PC-3 (cell line): ENCODE measurements at regions of chr12 and their contacts with region 1.

Region 1: GRCh38 chr12:114913871-114914801 is 230.2 kb upstream of the TBX3 start:
- DNase-seq: peak; percentile 94
- ATAC-seq: peak; percentile 50
- H3K4me3 ChIP-seq: no peak overlapping the region; the same call in 1 of the 2 replicates
- H3K27ac ChIP-seq: peak overlapping the region; percentile 57
- H3K4me1 ChIP-seq: peaks cover 67% of the 10 kb centered on the region
- H3K27me3 ChIP-seq: no peaks in the 10 kb centered on the region
- CTCF ChIP-seq: no peak

Region 2: GRCh38 chr12:114888448-114888847 is 25.7 kb before region 1 on chr12:
- CTCF ChIA-PET with region 1: no interaction called
- POLR2A ChIA-PET with region 1: interaction called, 3 read pairs
- intact Hi-C with region 1: loop called (anchors 1 kb)
- DNase-seq: peak; percentile 94
- ATAC-seq: peak; percentile 66
- H3K4me3 ChIP-seq: no peak overlapping the region
- H3K27ac ChIP-seq: no peak overlapping the region
- H3K4me1 ChIP-seq: peaks cover 32% of the 10 kb centered on the region
- H3K27me3 ChIP-seq: no peaks in the 10 kb centered on the region
- CTCF ChIP-seq: no peak

Region 3: GRCh38 chr12:114933428-114934168 is 19.5 kb after region 1 on chr12:
- CTCF ChIA-PET with region 1: interaction called, 7 read pairs
- POLR2A ChIA-PET with region 1: interaction called, 3 read pairs
- intact Hi-C with region 1: loop called (anchors 1 kb)
- DNase-seq: peak; percentile 98
- ATAC-seq: peak; percentile 96
- H3K4me3 ChIP-seq: peak overlapping the region; percentile 14; the same call in 1 of the 2 replicates
- H3K27ac ChIP-seq: peak overlapping the region; percentile 91
- H3K4me1 ChIP-seq: peaks cover 28% of the 10 kb centered on the region
- H3K27me3 ChIP-seq: no peaks in the 10 kb centered on the region
- CTCF ChIP-seq: no peak

Region 4: GRCh38 chr12:114999812-115000437 is 85.8 kb after region 1 on chr12:
- CTCF ChIA-PET with region 1: no interaction called
- POLR2A ChIA-PET with region 1: no interaction called
- intact Hi-C with region 1: loop called (anchors 1 kb)
- DNase-seq: peak; percentile 100
- ATAC-seq: peak; percentile 74
- H3K4me3 ChIP-seq: no peak overlapping the region
- H3K27ac ChIP-seq: peak overlapping the region; percentile 92
- H3K4me1 ChIP-seq: peaks cover 39% of the 10 kb centered on the region
- H3K27me3 ChIP-seq: no peaks in the 10 kb centered on the region
- CTCF ChIP-seq: no peak

Region 5: GRCh38 chr12:115013236-115013981 is 99.3 kb after region 1 on chr12:
- CTCF ChIA-PET with region 1: no interaction called
- POLR2A ChIA-PET with region 1: no interaction called
- intact Hi-C with region 1: no loop called
- DNase-seq: no peak
- ATAC-seq: no peak
- H3K4me3 ChIP-seq: no peak overlapping the region
- H3K27ac ChIP-seq: no peak overlapping the region
- H3K4me1 ChIP-seq: peaks cover 31% of the 10 kb centered on the region
- H3K27me3 ChIP-seq: no peaks in the 10 kb centered on the region
- CTCF ChIP-seq: no peak

Region 6: DNA sequence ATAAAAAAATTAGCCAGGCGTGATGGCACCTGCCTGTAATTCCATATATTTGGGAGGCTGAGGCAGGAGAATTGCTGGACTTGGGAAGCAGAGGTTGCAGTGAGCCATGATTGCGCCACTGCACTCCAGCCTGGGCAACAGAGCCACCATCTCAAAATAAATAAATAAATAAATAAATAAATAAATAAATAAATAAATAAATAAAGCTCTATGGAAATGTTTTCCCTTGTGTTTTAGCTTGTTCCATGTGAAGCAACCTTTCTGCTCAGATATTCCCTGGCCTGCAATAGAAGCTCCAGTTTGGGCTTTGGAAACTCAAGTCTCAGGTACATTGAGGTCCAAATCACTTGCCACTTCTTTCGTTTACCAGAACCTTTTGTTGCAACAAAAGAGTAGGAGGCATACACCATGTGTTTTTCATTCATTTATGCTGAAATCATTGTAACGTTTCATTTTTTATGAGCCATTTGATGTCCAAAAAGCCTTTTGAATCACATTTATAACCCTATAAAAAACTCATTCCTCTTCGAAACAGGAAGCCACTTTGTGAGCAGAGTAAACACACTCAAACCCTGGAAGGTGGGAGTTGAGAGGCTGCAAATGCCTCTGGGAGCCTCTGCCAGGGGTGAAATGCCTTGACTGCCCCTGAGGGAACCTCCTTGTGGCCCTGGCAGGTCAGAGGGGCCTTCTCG is 146.5 kb after region 1 on chr12:
- CTCF ChIA-PET with region 1: no interaction called
- POLR2A ChIA-PET with region 1: no interaction called
- intact Hi-C with region 1: loop called (anchors 10 kb)
- DNase-seq: peak; percentile 89
- ATAC-seq: peak; percentile 94
- H3K4me3 ChIP-seq: no peak overlapping the region
- H3K27ac ChIP-seq: peak overlapping the region; percentile 67
- H3K4me1 ChIP-seq: peaks cover 17% of the 10 kb centered on the region
- H3K27me3 ChIP-seq: no peaks in the 10 kb centered on the region
- CTCF ChIP-seq: no peak

Region 7: GRCh38 chr12:115398311-115398781 is 484.2 kb after region 1 on chr12:
- CTCF ChIA-PET with region 1: interaction called, 3 read pairs
- POLR2A ChIA-PET with region 1: no interaction called
- intact Hi-C with region 1: loop called (anchors 5 kb)
- DNase-seq: peak; percentile 86
- ATAC-seq: peak; percentile 97
- H3K4me3 ChIP-seq: no peak overlapping the region
- H3K27ac ChIP-seq: no peak overlapping the region
- H3K4me1 ChIP-seq: peaks cover 22% of the 10 kb centered on the region; the same call in 1 of the 2 replicates
- H3K27me3 ChIP-seq: no peaks in the 10 kb centered on the region
- CTCF ChIP-seq: peak; percentile 96